Activated naive CD4-positive, alpha-beta T cell treated with anti-CD3 and anti-CD28 coated beads for 36 hours (primary cell): ENCODE measurements at regions of chr14 and their contacts with region 1.

Region 1: DNA sequence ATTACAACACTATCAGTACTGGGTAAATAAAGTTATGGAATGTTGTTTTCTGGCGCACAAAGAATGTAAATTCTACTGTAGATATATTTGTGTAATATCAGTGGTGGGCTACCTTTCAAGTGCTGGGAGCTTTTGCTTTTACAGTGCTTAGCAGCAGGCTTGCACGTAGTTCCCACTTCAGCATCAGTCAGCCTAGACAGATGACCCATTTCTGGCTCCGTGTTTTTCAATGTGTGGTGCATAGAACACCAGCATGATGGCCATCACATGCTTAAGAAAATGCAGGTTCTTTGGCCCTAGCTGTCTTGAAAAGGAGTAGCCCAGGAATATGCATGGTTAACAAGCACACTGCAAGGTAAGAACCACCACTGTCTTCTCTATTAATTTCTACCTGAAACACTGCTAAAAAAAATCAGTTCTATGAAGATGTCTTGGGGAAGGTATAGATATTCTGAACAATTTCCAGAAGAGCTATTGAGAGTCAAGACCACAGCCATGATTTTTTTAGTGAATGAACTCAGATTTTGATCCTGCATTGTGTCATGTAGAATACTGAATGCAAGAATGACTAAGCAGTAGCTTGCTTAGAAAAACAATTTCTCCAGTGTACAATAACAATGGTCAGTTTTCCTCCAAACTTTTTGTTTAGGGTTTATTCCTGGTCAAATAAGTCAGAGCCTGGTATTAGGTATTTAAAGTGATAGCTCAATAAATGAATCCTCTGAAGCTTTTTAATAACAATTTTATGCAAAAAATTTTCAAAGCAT is 195.7 kb downstream of the AKAP6 start:
- DNase-seq: no peak
- H3K4me3 Mint-ChIP-seq: no peak overlapping the region
- H3K27ac Mint-ChIP-seq: no peak overlapping the region
- H3K4me1 Mint-ChIP-seq: no peaks in the 10 kb centered on the region
- H3K27me3 Mint-ChIP-seq: no peaks in the 10 kb centered on the region

Region 2: DNA sequence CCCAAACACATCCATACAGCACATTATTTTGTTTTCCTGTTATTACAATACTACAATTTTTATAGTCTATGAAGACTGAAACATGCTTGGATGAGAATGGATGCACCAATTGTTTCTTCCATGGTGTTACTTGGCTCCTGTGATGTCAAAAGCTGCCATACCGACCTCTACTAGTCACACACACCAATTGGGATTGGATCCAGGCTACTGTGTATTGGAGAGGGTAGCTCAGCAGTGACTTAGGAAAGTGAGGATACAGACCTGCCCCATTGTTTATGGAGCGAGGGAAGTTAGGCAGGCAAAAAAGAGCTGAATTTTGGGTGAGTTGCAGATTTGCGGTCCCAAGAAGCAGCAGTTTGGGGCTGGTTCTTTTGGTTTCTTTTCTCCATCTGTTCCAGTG is 226.4 kb before region 1 on chr14:
- CTCF ChIA-PET with region 1: no interaction called
- intact Hi-C with region 1: loop called (anchors 10 kb)
- DNase-seq: no peak
- H3K4me3 Mint-ChIP-seq: no peak overlapping the region
- H3K27ac Mint-ChIP-seq: no peak overlapping the region
- H3K4me1 Mint-ChIP-seq: no peaks in the 10 kb centered on the region
- H3K27me3 Mint-ChIP-seq: no peaks in the 10 kb centered on the region

Region 3: DNA sequence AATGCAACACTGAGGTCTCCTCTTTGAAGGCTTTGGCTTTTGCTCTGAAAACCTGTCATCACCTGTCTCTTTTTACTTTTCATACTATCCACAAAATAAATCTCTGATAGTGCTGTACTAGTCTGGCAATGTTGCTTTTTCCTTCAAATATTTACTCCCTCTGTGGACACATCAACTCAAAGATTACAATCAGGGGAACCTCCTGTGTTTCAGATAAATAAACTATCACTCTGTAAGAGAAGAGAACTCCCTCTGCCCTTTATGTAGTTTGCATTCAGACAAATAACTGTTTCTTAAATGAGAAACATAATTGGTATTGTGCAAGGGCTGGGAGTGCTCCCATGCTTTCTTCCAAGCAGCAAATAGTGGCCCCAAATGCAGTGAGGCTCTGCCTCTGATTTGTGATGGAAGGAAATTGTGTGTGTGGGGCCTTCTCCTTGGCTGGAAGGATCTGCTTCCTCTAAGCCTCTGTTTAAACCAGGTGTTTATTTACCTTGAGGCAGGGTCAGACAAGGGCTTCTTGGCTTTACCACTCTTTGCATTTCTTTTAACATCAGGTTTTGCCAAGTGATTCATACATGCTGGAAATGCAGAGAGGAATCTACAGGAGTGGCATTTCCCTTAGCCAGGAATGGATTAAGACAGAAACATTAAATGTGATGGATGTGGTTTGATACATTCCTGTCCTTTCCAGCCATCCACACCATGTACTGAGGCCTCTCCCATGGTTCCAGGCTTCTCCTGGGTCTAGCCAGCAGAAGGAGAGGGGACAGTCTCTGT is 126.7 kb before region 1 on chr14:
- CTCF ChIA-PET with region 1: no interaction called
- intact Hi-C with region 1: no loop called
- DNase-seq: no peak
- H3K4me3 Mint-ChIP-seq: no peak overlapping the region
- H3K27ac Mint-ChIP-seq: no peak overlapping the region
- H3K4me1 Mint-ChIP-seq: peaks cover 2% of the 10 kb centered on the region
- H3K27me3 Mint-ChIP-seq: no peaks in the 10 kb centered on the region

Region 4: GRCh38 chr14:32542507-32542906 is 17.7 kb after region 1 on chr14:
- CTCF ChIA-PET with region 1: no interaction called
- intact Hi-C with region 1: no loop called
- DNase-seq: no peak
- H3K4me3 Mint-ChIP-seq: no peak overlapping the region
- H3K27ac Mint-ChIP-seq: no peak overlapping the region
- H3K4me1 Mint-ChIP-seq: no peaks in the 10 kb centered on the region
- H3K27me3 Mint-ChIP-seq: no peaks in the 10 kb centered on the region